Gastrocnemius medialis (tissue), 4 donors: ENCODE measurements at regions of chr21 and their contacts with region 1.

Region 1: GRCh38 chr21:32727687-32728455 is at the start of gene SYNJ1:
- DNase-seq: peak; percentile 91 to 92
- ATAC-seq: peak; percentile 96 to 97
- H3K4me3 ChIP-seq: peak within 1 kb of the TSS; percentile 77 to 94 (median 92)
- H3K27ac ChIP-seq: peak within 1 kb of the TSS; percentile 83 to 94 (median 94)
- H3K4me1 ChIP-seq: peaks cover 14 to 19% of the 10 kb centered on the region in 2 donors
- H3K27me3 ChIP-seq: no peaks in the 10 kb centered on the region
- CTCF ChIP-seq: no peak
- POLR2A ChIP-seq: peak; percentile 83
- total RNA-seq, gene SYNJ1: 10.0 to 34.8 (median 10.8) TPM

Region 2: DNA sequence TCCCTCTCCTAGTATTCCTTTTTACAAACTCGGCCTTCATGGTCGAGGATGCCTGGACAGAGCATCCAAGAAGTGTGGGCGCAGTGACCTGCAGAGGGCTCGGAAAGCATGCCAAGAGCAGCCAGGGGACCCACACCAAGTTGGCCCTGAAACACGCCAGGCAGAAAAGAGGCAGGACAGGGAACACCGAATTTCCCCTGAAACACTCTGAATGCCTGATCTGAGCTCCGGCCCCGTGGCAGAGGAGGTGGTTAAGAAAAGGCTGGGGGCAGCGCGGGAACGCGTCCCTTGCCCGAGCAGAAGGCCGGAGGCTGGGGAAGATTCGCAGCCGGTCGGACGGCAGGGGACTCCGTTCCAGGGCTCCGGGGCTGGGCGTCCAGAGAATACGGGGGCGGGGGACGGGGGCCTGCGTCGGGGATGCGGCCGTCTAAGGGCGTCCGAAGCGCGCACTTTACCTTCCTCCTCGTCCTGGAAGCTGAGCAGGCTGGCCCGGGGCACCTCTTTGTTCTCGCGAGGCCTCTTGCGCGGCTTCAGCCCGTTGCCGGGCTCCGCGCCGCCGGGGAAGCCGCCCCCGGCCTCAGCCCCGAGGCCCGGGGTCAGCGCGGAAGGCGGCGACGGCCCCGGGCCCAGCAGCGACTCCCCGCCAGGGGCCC is 43.1 kb after region 1 on chr21:
- in situ Hi-C with region 1: loop called in 1 of 4 experiments (anchors 10 kb)
- intact Hi-C with region 1: loop called (anchors 1 kb)
- DNase-seq: peak; percentile 27 to 42
- ATAC-seq: peak; percentile 53 to 60
- H3K4me3 ChIP-seq: peak overlapping the region; percentile 83 to 94 (median 86)
- H3K27ac ChIP-seq: peak overlapping the region; percentile 87 to 95 (median 88)
- H3K4me1 ChIP-seq: peaks cover 34 to 40% of the 10 kb centered on the region in 2 donors
- H3K27me3 ChIP-seq: peaks cover 0 to 4% (median 0%) of the 10 kb centered on the region in 3 donors
- CTCF ChIP-seq: no peak
- POLR2A ChIP-seq: no peak

Region 3: GRCh38 chr21:32790626-32791025 is 62.8 kb after region 1 on chr21:
- in situ Hi-C with region 1: no loop called
- intact Hi-C with region 1: no loop called
- DNase-seq: no peak
- ATAC-seq: no peak
- H3K4me3 ChIP-seq: no peak overlapping the region
- H3K27ac ChIP-seq: no peak overlapping the region
- H3K4me1 ChIP-seq: no peaks in the 10 kb centered on the region
- H3K27me3 ChIP-seq: no peaks in the 10 kb centered on the region
- CTCF ChIP-seq: no peak
- POLR2A ChIP-seq: no peak